ENCODE measurements at regions of chr14 and their contacts with region 1.

Region 1: DNA sequence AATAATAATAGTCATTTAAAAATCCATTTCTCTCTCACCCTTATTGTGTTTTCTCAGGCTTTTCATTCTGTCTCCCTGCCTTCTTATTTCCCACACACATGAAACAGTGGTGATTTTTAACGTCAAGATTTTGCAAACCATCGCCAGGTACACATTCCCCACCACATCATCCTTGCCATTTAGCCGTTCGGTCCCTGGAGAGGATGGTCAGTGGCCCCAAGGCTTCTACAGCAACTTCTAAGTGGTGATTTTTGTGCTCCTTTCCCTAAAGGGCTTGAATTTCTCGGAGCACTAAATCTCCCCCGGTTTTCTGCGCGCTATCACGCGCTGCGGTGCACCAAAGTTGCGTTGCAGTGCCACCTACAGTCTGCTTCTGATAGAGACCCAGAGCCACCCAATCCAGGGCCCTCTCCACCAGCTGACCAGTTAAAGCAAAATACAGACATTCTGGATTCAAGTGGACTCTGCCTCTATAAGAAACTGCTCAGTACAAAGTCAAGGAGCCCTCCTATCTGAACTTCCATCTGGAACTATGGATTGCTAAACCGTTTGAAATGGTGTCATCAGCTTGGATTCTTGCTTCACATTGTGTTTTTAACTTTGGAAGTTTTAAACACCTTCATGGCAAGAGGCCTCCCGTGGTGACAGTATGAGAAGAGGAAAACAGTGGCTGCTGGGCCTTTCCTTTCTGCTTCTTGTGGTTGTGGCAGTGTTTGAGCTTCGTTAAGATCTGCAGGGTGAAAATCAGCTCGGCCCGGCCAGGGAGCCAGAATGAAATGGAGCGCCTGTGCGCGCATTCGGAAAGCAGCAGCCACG is 234.0 kb downstream of the SPTSSA start:
- DNase-seq: peak; percentile 71
- H3K4me3 Mint-ChIP-seq: no peak overlapping the region
- H3K27ac Mint-ChIP-seq: no peak overlapping the region
- H3K4me1 Mint-ChIP-seq: peaks cover 3% of the 10 kb centered on the region
- H3K27me3 Mint-ChIP-seq: peaks cover 4% of the 10 kb centered on the region

Region 2: DNA sequence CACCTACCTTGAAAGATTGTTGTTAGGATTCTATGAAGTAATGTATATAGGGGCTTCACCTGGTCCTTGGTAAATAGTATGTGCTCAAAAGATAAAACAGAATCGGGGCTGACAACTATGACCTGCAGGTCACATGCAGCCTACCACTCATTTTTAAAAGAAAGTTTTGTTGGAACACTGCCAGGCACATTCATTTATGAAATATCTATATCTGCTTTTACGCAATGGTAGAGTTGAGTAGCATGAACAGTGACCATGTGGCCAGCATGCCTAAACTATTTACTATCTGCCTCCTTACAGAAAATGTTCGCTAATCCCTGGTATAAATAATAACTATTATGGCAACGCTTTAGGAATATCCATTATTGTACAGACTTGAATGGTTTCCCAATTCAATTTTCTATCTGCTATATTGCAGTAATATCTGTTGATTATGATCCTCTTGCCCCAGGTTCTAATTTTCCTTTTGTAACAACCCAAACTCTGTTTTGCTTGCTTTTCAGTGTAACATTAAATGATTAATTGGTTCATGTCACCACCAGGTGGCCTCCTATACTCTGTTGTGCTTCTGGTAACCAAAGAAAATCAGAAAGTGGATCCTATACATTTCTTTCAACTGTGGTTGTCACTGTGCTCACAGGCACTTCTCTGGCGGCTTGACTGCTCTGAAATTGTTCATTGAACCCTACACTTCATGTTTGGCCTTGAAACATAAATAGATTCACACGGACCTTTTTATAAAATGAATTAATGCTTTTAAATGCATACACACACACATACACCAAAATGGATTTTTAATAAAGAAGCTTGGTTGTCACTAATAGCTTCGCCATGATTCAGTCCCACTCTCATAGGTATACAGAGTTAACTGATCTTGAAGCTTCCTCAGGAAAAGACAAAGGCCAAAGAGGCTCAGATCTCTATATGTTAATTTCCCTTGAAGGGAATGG is 1517.0 kb before region 1 on chr14:
- CTCF ChIA-PET with region 1: no interaction called
- intact Hi-C with region 1: loop called (anchors 10 kb)
- DNase-seq: peak; percentile 32
- H3K4me3 Mint-ChIP-seq: no peak overlapping the region
- H3K27ac Mint-ChIP-seq: no peak overlapping the region
- H3K4me1 Mint-ChIP-seq: peaks cover 2% of the 10 kb centered on the region
- H3K27me3 Mint-ChIP-seq: no peaks in the 10 kb centered on the region

Region 3: DNA sequence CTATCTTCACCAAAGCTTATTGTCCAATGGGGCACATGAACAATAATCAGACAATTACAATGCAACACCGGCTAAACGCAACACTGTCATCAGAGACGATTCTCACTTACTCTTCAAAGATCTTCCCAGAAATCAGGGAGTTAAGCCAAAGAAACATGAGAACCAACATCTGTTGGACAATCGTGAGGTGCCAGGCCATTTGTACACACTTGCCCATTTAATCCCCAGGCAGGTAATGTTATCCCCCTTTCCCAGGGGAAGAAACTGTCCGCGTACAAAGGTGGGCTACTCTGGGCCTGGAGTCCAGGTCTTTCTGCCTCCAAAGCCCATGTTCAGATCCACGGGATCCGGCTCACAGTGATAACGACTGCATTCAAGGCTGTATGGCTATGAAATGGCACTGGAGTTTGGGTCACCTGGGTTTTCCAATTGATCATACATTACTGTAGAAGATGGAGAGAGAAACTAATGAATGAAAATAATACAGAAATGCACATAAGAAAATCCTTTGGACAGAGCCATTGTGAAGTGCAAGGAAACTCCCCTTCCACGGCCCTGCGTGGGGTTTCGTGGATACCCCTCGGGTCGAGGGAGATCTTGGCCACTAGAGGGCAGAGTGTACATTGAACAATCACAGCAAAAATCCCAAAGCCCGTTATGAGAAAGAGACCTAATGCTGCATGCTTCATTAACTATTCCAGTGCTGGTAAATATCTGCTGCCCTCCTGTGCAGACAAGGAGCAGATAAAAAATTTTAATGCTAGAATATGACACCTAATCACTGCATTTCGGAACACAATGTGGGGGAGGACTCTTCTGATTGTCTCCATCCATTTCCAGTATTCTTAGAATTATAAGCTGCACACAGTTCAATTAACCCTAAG is 388.6 kb before region 1 on chr14:
- CTCF ChIA-PET with region 1: interaction called, 11 read pairs
- intact Hi-C with region 1: loop called (anchors 1 kb)
- DNase-seq: peak; percentile 61
- H3K4me3 Mint-ChIP-seq: no peak overlapping the region
- H3K27ac Mint-ChIP-seq: no peak overlapping the region
- H3K4me1 Mint-ChIP-seq: no peaks in the 10 kb centered on the region
- H3K27me3 Mint-ChIP-seq: no peaks in the 10 kb centered on the region

Region 4: DNA sequence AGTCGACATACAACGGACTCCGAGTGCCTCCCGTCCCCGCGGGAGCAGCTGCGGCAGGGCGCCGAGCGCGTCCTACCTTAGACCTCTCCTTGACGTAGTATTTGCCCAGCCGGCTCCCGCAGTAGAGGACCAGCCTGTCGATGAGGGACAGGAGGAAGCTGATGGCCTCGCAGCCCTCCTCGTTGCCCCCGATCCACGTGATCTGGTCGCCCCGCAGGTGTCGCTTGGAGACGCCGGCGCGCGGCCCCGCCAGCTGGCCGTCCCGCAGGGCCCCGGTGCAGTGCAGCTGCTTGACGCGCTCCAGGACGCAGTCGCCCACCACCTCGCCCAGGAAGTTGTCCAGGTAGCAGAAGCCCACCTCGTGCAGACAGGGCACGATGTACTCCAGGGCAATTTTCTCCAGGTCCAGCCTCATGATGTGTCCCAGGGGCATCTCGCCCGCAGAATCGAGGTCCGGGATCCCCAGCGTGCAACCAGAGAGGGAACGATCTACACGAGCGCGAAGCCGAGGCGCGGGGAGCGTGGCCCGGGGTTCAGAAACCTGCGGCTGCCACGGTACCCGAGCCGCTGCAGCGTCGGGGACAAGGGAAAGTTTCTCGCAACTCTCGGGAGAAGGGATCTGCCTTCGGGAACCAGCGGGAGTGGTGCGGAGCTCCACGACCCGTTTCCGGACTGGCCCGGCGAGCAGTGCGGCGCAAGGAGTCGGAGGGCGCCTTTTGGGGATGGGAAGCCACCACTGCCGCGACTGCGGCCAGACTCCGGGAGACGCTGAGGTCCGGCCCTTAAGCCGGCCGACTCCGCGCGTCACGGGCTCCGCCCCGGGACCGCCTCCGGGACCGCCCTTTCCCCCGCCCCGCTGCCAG is 277.5 kb before region 1 on chr14 and contains the start of gene EGLN3:
- CTCF ChIA-PET with region 1: no interaction called
- intact Hi-C with region 1: loop called (anchors 10 kb)
- DNase-seq: peak; percentile 48
- H3K4me3 Mint-ChIP-seq: peak within 1 kb of the TSS; percentile 72
- H3K27ac Mint-ChIP-seq: no peak within 1 kb of the TSS
- H3K4me1 Mint-ChIP-seq: peaks cover 7% of the 10 kb centered on the region
- H3K27me3 Mint-ChIP-seq: peaks cover 47% of the 10 kb centered on the region
- total RNA-seq, gene EGLN3: 0.07 to 0.48 TPM

Region 5: DNA sequence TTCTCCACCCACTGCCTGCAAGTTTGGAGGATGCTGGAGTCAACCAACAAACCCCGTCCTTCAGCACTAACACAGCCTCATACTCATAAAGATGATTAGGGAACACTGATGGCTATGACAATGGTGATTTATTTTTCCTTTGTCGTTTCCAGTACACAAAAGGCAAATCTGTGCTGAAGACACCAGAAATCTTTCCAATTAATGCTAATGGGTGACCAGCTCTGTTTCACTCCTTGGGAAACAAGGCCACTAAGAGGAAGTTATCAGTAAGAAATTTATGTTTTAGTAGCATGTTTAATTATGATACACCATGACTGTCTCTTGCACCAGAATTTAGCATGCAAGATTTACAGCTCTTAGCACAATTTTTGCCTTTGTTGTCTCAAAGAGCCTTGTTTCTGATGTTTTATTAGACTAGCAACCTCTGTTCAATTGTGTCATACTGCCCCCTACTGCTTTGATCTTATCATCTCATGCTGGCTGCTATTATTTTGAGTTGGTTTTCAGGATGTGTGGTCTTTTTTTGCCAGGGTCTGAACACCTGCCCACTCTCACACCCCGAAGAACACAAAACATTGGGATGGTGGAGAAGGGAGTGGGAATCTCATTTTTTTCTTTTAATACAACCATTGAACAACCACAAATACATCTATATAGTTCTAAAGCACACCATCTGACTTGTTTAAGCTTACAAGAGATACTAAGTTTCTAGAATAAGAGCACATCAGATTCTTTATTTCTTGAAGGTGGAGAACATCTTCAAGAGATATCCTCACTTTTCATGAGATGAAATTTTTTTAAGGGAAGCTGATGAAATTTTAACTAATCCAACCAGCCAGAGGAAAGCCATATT is 73.1 kb after region 1 on chr14:
- CTCF ChIA-PET with region 1: no interaction called
- intact Hi-C with region 1: loop called (anchors 5 kb)
- DNase-seq: peak; percentile 13
- H3K4me3 Mint-ChIP-seq: no peak overlapping the region
- H3K27ac Mint-ChIP-seq: no peak overlapping the region
- H3K4me1 Mint-ChIP-seq: no peaks in the 10 kb centered on the region
- H3K27me3 Mint-ChIP-seq: no peaks in the 10 kb centered on the region

Measured in activated naive CD4-positive, alpha-beta T cell treated with anti-CD3 and anti-CD28 coated beads for 36 hours (primary cell).